ENCODE measurements at regions of chr6 and their contacts with region 1.

Region 1: GRCh38 chr6:32413427-32414047 is 6.6 kb upstream of the BTNL2 start:
- DNase-seq: peak; percentile 82
- H3K4me3 ChIP-seq: no peak overlapping the region
- H3K27ac ChIP-seq: no peak overlapping the region
- H3K4me1 ChIP-seq: peaks cover 9% of the 10 kb centered on the region
- CTCF ChIP-seq: peak; percentile 96

Region 2: DNA sequence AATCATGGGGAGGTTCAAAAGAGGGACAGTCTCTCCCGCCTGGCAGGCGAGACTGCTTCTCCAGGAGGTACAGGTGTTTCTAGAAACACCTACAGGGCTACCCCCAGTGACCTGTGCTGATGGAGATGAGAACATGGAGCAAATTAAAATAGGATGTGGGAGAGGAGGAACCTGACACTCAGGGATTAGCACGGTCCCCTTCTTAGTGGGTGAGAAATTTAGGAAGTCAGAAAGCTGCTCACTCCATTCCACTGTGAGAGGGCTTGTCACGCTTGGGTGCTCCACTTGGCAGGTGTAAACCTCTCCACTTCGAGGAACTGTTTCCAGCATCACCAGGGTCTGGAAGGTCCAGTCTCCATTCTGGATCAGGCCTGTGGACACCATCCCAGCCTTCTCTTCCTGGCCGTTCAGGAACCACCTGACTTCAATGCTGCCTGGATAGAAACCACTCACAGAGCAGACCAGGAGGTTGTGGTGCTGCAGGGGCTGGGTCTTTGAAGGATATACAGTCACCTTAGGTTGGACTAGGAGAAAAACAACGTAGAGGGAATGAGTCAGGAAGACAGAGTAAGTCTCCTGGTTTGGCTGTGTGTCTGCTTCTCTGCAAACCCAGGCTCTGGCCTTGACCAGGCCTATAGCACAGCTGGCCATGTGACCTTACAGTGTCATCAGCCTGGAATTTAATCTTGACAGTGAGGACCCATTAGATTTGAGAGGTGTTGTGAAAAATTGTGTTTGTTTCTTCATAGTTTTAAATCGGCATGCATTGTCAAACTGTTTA is 168.0 kb after region 1 on chr6:
- CTCF ChIA-PET with region 1: no interaction called
- POLR2A ChIA-PET with region 1: no interaction called
- intact Hi-C with region 1: no loop called
- DNase-seq: no peak
- H3K4me3 ChIP-seq: no peak overlapping the region
- H3K27ac ChIP-seq: no peak overlapping the region
- H3K4me1 ChIP-seq: peaks cover 14% of the 10 kb centered on the region
- CTCF ChIP-seq: no peak

Region 3: DNA sequence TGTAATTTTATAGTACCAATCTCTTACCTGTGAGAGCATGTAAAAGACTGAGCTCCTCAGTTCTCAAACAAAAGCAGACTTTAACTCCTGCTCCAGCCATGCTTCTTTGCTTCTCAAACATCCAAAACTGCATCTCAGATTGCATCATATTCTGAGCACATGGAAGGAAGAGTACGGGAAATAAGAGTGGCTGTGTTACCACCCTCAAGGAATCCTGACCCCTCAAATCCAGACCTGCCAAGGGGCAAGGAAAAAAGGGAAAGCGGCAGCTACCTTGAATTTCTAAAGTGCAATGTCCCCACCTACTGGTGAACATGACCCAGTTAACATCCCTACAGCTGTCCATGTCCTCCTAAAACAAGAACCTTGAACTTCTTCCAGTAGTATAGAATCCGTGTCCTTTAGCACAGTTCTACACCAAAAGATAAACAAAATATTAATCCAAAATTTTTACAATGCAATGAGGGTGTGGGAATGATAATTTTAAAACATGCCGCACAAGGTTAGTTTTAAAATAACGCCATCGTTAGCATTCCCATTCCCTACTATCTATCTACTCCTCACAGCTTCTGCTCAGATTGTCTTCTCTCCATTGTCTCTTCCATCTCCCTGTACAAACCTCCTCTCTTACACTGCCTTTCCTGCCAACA is 287.0 kb after region 1 on chr6:
- CTCF ChIA-PET with region 1: no interaction called
- POLR2A ChIA-PET with region 1: interaction called, 3 read pairs
- intact Hi-C with region 1: loop called (anchors 1 kb)
- DNase-seq: peak; percentile 70
- H3K4me3 ChIP-seq: no peak overlapping the region
- H3K27ac ChIP-seq: no peak overlapping the region
- H3K4me1 ChIP-seq: peaks cover 6% of the 10 kb centered on the region
- CTCF ChIP-seq: peak; percentile 95

Region 4: DNA sequence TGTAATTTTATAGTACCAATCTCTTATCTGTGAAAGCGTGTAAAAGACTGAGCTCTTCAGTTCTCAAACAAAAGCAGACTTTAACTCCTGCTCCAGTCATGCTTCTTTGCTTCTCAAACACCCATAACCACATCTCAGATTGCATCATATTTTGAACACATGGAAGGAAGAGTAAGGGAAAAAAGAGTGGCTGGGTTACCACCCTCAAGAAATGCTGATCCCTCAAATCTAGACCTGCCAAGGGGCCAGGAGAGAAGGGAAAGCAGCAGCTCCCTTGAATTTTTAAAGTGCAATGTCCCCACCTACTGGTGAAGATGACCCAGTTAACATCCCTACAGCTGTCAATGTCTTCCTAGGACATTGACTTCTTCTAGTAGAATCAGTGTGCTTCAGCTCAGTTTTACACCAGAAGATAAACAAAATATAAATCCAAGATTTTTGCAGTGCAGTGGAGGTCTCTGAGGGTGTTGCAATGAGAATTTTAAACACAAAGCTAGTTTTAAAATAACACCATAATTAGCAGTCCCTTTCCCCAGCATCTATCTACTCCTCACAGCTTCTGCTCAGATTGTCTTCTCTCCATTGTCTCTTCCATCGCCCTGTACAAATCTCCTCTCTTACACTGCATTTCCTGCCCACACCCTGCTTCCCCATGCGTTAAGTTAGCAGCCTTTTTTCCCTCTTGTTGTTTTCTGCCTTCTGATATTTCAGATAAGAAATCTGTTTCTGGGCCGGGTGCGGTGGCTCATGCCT is 372.4 kb after region 1 on chr6:
- CTCF ChIA-PET with region 1: interaction called, 4 read pairs
- POLR2A ChIA-PET with region 1: interaction called, 4 read pairs
- intact Hi-C with region 1: loop called (anchors 1 kb)
- DNase-seq: peak; percentile 73
- H3K4me3 ChIP-seq: no peak overlapping the region
- H3K27ac ChIP-seq: no peak overlapping the region
- H3K4me1 ChIP-seq: no peaks in the 10 kb centered on the region
- CTCF ChIP-seq: peak; percentile 85

Region 5: DNA sequence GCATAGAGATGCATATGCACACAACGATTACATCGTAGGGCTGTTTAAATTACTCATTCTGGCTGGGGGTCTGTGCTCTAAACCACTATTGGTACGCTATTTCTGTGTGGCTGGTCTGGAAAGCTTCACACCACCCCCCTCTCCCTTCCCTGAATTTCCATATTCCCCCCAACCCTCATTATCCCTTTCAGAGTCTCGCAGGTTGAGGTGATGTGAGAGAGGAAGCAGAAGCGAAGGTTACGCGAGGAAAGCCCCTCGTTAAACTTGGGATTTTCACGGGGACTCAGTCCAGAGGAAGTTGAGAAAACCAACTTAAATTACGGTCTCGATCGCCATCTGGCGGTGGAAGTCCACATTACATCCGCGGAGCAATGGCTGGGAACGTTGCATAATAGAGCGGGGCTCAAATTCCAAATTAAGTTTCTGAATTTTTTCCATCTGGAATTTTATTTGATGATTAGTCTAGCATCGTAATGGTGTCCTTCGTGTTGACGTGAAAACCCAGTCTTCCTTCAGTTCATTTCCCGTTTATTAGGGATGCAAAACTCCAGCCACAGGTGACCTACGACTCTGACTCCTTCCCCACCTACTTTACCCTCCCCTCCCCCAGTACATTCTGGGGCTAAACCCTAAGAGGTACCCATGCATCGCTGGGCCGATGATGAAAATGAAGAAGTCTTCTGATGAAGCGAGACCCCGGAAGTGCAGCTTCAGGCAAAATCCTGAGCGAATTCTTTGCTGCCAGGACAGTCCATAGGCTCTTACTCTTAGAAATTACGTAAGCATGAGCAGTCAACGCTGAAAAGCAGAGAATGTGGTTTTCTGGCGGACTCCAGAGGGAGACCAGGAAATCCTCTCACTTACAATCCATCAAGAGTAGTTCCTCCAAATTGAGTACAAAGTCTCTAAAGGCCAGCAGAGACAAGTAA is 383.6 kb after region 1 on chr6:
- CTCF ChIA-PET with region 1: no interaction called
- POLR2A ChIA-PET with region 1: no interaction called
- intact Hi-C with region 1: loop called (anchors 2 kb)
- DNase-seq: peak; percentile 85
- H3K4me3 ChIP-seq: peak overlapping the region; percentile 44
- H3K27ac ChIP-seq: peak overlapping the region; percentile 57
- H3K4me1 ChIP-seq: peaks cover 34% of the 10 kb centered on the region
- CTCF ChIP-seq: peak; percentile 97